ENCODE measurements at regions of chr11 and their contacts with region 1.

Region 1: DNA sequence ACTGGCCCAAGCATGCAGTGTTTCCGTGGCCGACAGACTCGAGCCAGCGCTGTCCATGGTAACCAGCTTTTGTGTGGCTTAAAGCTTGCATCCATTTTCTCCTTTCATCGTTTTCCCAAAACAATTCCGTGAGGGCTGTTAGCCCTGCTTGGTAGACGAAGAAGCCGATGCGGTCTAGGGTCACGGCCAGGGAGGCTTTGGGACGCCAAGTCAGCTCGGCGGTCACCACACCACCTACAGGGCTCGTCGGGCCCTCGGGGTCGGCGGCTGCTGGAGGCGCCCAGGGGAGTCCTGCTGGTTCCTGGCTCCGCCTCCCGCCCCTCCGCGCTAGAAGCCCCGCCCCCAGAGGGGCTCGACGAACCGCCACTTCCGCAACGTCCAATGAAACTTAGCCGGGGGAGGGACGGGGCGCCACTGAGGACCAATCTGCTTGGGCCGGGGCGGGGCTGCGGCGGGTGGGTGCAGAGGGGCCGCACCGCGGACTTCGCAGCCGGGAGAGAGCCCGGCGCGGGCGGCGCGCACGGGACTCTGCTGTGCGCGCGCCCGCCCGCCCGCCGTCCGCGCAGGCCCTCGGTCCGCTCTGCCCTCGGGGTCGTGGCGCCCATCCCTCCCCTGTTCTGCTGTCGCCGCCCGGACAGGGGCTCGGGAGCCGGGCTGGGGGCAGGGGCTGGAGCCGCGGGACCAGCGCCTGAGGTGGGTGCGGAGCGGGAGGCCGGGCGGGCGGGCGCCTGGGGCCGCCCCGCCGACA is at the start of gene TIGD3:
- DNase-seq: peak; percentile 94 to 99 (median 98)
- ATAC-seq: peak; percentile 97
- H3K4me3 ChIP-seq: peak within 1 kb of the TSS; percentile 49 to 51
- H3K4me3 Mint-ChIP-seq: peak within 1 kb of the TSS; percentile 91
- H3K27ac ChIP-seq: peak within 1 kb of the TSS in 1 of 2 experiments; percentile 58
- H3K27ac Mint-ChIP-seq: peak within 1 kb of the TSS; percentile 81
- H3K4me1 ChIP-seq: peaks cover 6% of the 10 kb centered on the region
- H3K4me1 Mint-ChIP-seq: peaks cover 13% of the 10 kb centered on the region
- H3K27me3 ChIP-seq: no peaks in the 10 kb centered on the region
- H3K27me3 Mint-ChIP-seq: no peaks in the 10 kb centered on the region
- CTCF ChIP-seq: no peak
- total RNA-seq, gene TIGD3: 0.35 to 0.75 TPM

Region 2: GRCh38 chr11:65382033-65382807 is 27.8 kb after region 1 on chr11 and contains the start of gene SLC25A45:
- CTCF ChIA-PET with region 1: no interaction called
- POLR2A ChIA-PET with region 1: interaction called, 3 read pairs
- intact Hi-C with region 1: loop called in 1 of 2 experiments (anchors 2 kb)
- DNase-seq: peak; percentile 77 to 96 (median 92)
- ATAC-seq: peak; percentile 83
- H3K4me3 ChIP-seq: peak within 1 kb of the TSS; percentile 60 to 98
- H3K4me3 Mint-ChIP-seq: peak within 1 kb of the TSS; percentile 87
- H3K27ac ChIP-seq: peak within 1 kb of the TSS; percentile 97 to 100
- H3K27ac Mint-ChIP-seq: peak within 1 kb of the TSS; percentile 99
- H3K4me1 ChIP-seq: peaks cover 54% of the 10 kb centered on the region
- H3K4me1 Mint-ChIP-seq: peaks cover 42% of the 10 kb centered on the region
- H3K27me3 ChIP-seq: no peaks in the 10 kb centered on the region
- H3K27me3 Mint-ChIP-seq: no peaks in the 10 kb centered on the region
- CTCF ChIP-seq: peak; percentile 81
- total RNA-seq, gene SLC25A45: 27.8 to 29.6 TPM

Measured in CD8-positive, alpha-beta T cell (primary cell).